Activated CD4-positive, alpha-beta memory T cell treated with anti-CD3 and anti-CD28 coated beads, Interleukin-2, amount 10 ng/mL, durations not matched to agents 7 days and 5 days (primary cell): ENCODE measurements at regions of chr5 and their contacts with region 1.

Region 1: GRCh38 chr5:36151434-36152323 is at the starts of genes LMBRD2 and SKP2:
- DNase-seq: peak; percentile 98
- H3K4me3 Mint-ChIP-seq: peak within 1 kb of the TSS; percentile 97
- H3K27ac Mint-ChIP-seq: peak within 1 kb of the TSS; percentile 83
- H3K4me1 Mint-ChIP-seq: peaks cover 68% of the 10 kb centered on the region
- H3K27me3 Mint-ChIP-seq: no peaks in the 10 kb centered on the region
- total RNA-seq, gene LMBRD2: 13.2 to 14.4 TPM
- total RNA-seq, gene SKP2: 33.1 to 37.9 TPM

Region 2: DNA sequence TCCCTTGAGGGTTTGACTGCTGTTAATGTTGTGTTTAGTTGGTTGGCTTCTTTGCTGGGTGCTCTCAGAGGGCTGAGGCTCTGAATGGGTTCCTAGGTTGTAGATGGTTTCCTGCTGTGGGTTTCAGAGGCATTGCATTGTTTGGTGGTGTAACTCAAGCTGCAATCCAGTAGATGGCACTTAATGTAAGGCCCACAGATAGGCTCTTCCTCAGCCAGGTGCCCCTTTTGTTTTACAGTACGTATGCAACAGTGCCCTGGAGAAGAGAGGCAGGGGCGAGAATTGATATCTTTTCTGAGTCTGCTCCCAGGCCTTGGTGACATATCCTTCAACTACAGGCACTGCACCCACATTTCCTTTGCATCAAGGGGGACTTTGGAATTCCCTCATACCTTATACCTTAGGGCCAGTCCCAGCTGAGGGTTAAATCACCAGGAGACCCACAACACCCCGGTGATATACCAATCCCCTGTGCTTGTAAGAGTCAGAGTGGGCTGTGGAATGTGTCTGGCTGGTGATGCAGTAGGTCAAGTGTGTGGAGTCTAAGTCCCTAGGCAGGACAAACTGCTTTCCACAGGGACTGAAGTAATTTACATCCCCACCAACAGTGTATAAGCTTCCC is 78.0 kb before region 1 on chr5:
- CTCF ChIA-PET with region 1: interaction called, 23 read pairs
- POLR2A ChIA-PET with region 1: interaction called, 6 read pairs
- DNase-seq: no peak
- H3K4me3 Mint-ChIP-seq: no peak overlapping the region
- H3K27ac Mint-ChIP-seq: no peak overlapping the region
- H3K4me1 Mint-ChIP-seq: peaks cover 14% of the 10 kb centered on the region
- H3K27me3 Mint-ChIP-seq: peaks cover 32% of the 10 kb centered on the region

Region 3: GRCh38 chr5:36079200-36079761 is 72.4 kb before region 1 on chr5:
- CTCF ChIA-PET with region 1: interaction called, 23 read pairs
- POLR2A ChIA-PET with region 1: interaction called, 6 read pairs
- DNase-seq: peak; percentile 31
- H3K4me3 Mint-ChIP-seq: no peak overlapping the region
- H3K27ac Mint-ChIP-seq: no peak overlapping the region
- H3K4me1 Mint-ChIP-seq: no peaks in the 10 kb centered on the region
- H3K27me3 Mint-ChIP-seq: peaks cover 50% of the 10 kb centered on the region

Region 4: GRCh38 chr5:36096486-36096885 is 55.2 kb before region 1 on chr5:
- CTCF ChIA-PET with region 1: no interaction called
- POLR2A ChIA-PET with region 1: no interaction called
- DNase-seq: no peak
- H3K4me3 Mint-ChIP-seq: no peak overlapping the region
- H3K27ac Mint-ChIP-seq: no peak overlapping the region
- H3K4me1 Mint-ChIP-seq: no peaks in the 10 kb centered on the region
- H3K27me3 Mint-ChIP-seq: no peaks in the 10 kb centered on the region

Region 5: DNA sequence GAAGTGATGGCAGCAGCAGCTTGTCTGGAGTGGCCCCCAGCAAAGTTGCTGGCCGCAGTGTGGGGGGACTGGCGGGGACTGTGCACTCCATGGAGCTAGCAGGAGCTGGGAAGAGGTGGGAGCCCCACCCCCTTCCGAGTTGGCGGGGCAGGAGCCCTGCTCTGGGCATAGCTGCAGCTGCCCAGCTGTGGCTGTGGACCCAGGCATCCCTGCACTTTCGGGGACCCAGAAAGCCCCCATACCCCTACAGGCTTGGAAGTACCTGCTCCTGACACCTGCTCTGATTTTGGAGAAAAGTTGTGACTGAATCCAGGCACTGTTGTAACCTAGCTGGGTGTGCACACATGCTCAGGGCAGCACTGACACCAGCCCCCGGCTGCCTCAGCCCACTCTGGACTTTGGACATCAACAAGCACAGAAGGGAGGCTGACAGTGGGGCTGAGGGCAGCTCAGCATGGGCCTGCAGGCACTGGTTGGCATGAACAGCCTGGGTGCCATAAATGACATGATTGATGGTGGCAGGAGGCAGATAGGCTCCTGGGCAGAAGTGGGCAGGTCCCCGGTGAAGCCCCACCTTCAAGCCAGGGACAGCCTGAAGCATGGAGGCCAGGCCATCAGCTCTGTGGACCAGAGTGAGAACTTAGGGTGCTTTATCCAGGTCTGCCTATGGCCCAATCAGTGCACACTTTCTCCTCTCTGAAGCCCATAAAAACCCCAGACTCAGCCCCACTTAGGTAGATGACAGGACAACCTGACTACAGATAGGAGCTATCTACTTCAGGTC is 12.6 kb before region 1 on chr5:
- CTCF ChIA-PET with region 1: no interaction called
- POLR2A ChIA-PET with region 1: interaction called, 11 read pairs
- DNase-seq: no peak
- H3K4me3 Mint-ChIP-seq: no peak overlapping the region
- H3K27ac Mint-ChIP-seq: no peak overlapping the region
- H3K4me1 Mint-ChIP-seq: no peaks in the 10 kb centered on the region
- H3K27me3 Mint-ChIP-seq: no peaks in the 10 kb centered on the region

Region 6: DNA sequence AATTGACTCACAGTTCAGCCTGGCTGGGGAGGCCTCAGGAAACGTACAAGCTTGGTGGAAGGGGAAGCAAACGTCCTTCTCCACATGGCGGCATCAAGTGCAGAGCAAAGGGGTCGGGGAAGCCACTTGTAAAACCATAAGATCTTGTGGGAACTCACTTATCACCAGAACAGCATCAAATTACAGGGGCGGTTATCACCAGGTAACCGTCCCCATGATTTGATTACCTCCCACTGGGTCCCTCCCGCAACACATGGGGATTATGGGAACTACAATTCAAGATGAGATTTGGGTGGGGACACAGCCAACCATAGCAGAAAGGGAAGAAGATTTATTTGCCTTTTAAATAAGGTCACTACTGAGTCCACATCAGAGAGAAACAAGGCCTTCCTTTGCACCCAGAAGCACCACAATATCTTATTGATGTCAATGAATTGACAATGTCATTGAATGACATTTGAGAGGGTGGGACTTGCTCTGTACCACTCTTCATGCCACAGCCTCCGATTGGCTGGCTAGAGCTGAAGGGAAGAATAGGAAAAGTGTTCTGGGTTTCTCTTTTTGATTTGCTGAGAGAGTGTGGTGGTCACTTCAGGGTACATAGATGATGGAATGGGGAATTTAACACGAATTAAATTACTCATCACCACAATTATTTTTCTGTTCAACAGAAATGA is 11.3 kb after region 1 on chr5:
- CTCF ChIA-PET with region 1: interaction called, 4 read pairs
- POLR2A ChIA-PET with region 1: interaction called, 23 read pairs
- DNase-seq: no peak
- H3K4me3 Mint-ChIP-seq: no peak overlapping the region
- H3K27ac Mint-ChIP-seq: no peak overlapping the region
- H3K4me1 Mint-ChIP-seq: peaks cover 27% of the 10 kb centered on the region
- H3K27me3 Mint-ChIP-seq: no peaks in the 10 kb centered on the region

Region 7: GRCh38 chr5:36168737-36169136 is 17.1 kb after region 1 on chr5:
- CTCF ChIA-PET with region 1: interaction called, 4 read pairs
- POLR2A ChIA-PET with region 1: interaction called, 23 read pairs
- DNase-seq: no peak
- H3K4me3 Mint-ChIP-seq: no peak overlapping the region
- H3K27ac Mint-ChIP-seq: peak overlapping the region; percentile 70
- H3K4me1 Mint-ChIP-seq: peaks cover 16% of the 10 kb centered on the region
- H3K27me3 Mint-ChIP-seq: no peaks in the 10 kb centered on the region

Region 8: DNA sequence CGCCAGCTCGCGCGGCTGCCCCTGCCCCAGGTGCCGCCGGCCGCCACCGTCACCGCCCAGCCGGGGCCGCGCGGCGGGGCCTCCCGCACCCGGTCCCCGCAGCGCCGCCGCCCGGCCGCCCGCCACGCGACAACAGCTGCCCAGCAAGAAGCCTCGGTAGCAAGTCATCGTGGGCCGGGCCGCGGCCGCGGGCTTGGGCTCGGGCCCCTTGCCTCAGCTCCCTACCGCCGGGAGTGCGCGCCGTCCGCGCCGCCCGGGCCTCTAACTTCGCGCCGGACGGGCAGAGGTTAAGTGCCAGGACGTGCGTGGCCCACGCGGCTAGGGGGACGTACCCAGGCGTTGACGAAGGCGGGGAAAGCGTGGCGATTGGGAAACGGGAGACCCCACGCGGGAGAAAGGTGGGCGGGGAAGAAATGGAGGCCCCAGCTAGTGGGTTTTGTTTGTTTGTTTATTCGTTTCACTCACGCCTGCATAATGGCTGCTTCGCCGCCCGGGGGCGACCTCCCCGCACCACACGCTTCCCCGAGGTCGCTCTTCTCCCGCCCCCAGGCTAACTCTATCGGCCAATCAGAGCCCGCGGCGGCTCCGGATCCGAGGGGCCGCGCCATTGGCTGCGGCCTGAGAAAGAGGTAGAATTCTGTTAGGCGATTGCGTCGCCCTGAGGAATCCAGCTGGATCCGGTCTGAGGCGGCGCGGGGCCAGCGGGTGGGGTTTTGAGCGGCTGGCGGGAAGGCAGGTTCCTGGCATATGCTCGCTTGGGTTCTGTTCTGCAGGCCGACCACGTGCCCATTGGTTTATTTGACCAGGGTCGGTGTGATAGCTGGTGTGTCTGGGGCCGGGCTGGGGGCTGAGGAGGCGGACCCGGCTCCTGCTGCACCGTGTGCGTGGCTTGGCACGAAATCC is 90.2 kb after region 1 on chr5 and contains the start of gene NADK2:
- CTCF ChIA-PET with region 1: interaction called, 34 read pairs
- POLR2A ChIA-PET with region 1: interaction called, 80 read pairs
- DNase-seq: peak; percentile 95
- H3K4me3 Mint-ChIP-seq: peak within 1 kb of the TSS; percentile 87
- H3K27ac Mint-ChIP-seq: peak within 1 kb of the TSS; percentile 81
- H3K4me1 Mint-ChIP-seq: peaks cover 37% of the 10 kb centered on the region
- H3K27me3 Mint-ChIP-seq: no peaks in the 10 kb centered on the region
- total RNA-seq, gene NADK2: 15.8 to 16.2 TPM